ENCODE measurements at regions of chr18 and their contacts with region 1.

Region 1: DNA sequence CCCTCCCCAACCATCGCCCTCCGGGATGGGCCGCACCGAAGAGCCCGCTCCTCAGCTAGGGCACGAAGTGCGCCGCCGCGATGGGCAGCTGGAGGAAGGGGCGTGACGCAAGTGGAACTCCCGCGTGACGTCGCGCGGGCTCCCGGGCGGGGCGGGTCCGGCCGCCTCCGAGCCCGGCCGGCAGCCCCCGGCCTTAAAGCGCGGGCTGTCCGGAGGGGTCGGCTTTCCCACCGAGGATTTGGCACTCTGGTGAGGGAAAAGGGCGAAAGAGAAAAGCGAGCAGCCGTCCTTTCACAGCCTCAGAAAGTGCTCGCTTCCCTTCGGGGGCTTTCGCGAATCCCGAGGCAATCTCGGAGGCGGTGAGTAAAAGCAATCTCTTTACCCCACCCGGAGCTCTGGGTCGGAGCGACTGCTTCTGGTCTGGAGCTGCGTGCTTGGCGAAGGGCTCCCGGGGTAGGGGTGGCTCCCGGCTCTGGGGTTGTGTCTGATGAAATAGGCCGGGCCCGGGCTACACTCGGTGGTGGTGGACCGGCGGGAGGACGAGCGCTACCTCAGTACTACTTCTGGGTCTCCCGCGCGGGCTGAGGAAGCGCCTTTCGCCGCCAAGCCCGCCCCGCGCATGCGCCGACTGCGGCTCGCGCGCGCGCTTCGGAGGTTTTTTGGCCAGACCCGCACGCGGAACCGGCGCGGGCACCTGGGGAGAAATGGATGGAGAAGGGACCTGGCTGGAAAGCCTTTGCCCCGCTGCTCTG is at the start of gene RBBP8:
- DNase-seq: peak; percentile 53 to 76
- H3K4me3 ChIP-seq: peak within 1 kb of the TSS; percentile 86
- H3K27ac ChIP-seq: peak within 1 kb of the TSS; percentile 71
- H3K4me1 ChIP-seq: peaks cover 7% of the 10 kb centered on the region; the same call in 1 of the 2 replicates
- H3K27me3 ChIP-seq: no peaks in the 10 kb centered on the region
- CTCF ChIP-seq: no peak
- total RNA-seq, gene RBBP8: 22.0 and 28.4 TPM in 2 replicates

Region 2: GRCh38 chr18:22813648-22814328 is 119.6 kb before region 1 on chr18:
- CTCF ChIA-PET with region 1: interaction called, 4 read pairs
- POLR2A ChIA-PET with region 1: no interaction called
- intact Hi-C with region 1: loop called (anchors 5 kb)
- DNase-seq: peak in 1 of 2 experiments; percentile 39
- H3K4me3 ChIP-seq: no peak overlapping the region
- H3K27ac ChIP-seq: no peak overlapping the region
- H3K4me1 ChIP-seq: 0 out of 2 replicates have a peak, but pooled peaks cover 5% of the 10 kb centered on the region
- H3K27me3 ChIP-seq: no peaks in the 10 kb centered on the region
- CTCF ChIP-seq: peak; percentile 72

Region 3: DNA sequence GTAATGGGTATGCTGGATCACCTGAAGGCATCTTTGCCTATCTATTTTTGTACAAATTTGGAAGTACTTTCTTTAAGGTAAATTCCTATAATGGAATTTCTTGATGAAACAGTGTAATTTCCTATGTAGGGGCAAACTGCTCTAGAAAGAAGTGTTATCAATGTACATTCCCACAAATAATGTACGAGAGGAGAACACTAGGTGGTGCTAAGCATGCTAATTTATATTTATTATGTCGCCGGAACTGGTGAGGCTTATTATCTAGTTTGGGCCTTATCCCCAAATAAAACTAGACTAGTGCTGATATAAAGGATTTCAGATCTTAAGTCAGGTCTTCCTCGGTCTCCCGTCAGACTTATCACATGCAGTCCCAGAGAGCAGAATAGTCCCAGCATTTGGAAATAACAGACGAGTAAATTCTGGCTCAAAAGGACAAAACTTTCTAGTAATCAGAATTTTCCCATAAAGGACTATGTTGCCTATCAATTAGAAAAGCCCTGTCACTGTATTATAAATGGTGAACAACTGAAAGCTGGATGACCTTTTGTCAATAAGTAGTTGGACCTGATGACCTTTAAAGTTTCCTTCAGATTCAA is 87.2 kb before region 1 on chr18:
- CTCF ChIA-PET with region 1: interaction called, 10 read pairs
- POLR2A ChIA-PET with region 1: no interaction called
- intact Hi-C with region 1: loop called (anchors 5 kb)
- DNase-seq: no peak
- H3K4me3 ChIP-seq: no peak overlapping the region
- H3K27ac ChIP-seq: no peak overlapping the region
- H3K4me1 ChIP-seq: peaks cover 44% of the 10 kb centered on the region
- H3K27me3 ChIP-seq: no peaks in the 10 kb centered on the region
- CTCF ChIP-seq: peak; percentile 39; the same call in 1 of the 2 replicates

Region 4: GRCh38 chr18:22872900-22873551 is 60.4 kb before region 1 on chr18:
- CTCF ChIA-PET with region 1: no interaction called
- POLR2A ChIA-PET with region 1: no interaction called
- intact Hi-C with region 1: no loop called
- DNase-seq: no peak
- H3K4me3 ChIP-seq: no peak overlapping the region
- H3K27ac ChIP-seq: no peak overlapping the region
- H3K4me1 ChIP-seq: no peaks in the 10 kb centered on the region
- H3K27me3 ChIP-seq: no peaks in the 10 kb centered on the region
- CTCF ChIP-seq: no peak

Region 5: DNA sequence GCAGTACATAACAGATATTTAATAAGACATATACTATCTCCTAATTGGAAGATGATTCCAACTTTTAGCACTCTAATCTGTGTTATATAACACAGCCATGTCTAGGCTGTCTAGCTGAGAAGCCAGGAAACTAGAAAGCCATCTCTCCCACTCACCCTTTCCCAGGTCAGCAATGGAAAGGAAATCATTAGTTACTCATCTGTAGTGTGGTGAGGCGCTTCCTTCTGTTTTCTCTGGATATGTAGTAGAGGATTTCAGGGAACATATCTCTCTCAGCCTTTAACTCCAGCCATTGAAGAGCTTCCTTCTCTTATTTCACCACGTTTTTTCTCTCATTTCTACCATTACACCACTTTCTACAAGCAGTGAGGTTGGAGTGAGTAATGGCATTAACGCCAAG is 19.1 kb after region 1 on chr18:
- CTCF ChIA-PET with region 1: no interaction called
- POLR2A ChIA-PET with region 1: no interaction called
- intact Hi-C with region 1: no loop called
- DNase-seq: no peak
- H3K4me3 ChIP-seq: no peak overlapping the region
- H3K27ac ChIP-seq: no peak overlapping the region
- H3K4me1 ChIP-seq: no peaks in the 10 kb centered on the region
- H3K27me3 ChIP-seq: no peaks in the 10 kb centered on the region
- CTCF ChIP-seq: no peak

Region 6: GRCh38 chr18:22971038-22971437 is 37.7 kb after region 1 on chr18:
- CTCF ChIA-PET with region 1: no interaction called
- POLR2A ChIA-PET with region 1: interaction called, 26 read pairs
- intact Hi-C with region 1: no loop called
- DNase-seq: no peak
- H3K4me3 ChIP-seq: no peak overlapping the region
- H3K27ac ChIP-seq: no peak overlapping the region
- H3K4me1 ChIP-seq: no peaks in the 10 kb centered on the region
- H3K27me3 ChIP-seq: no peaks in the 10 kb centered on the region
- CTCF ChIP-seq: no peak

Region 7: GRCh38 chr18:22983175-22983574 is 49.8 kb after region 1 on chr18:
- CTCF ChIA-PET with region 1: interaction called, 3 read pairs
- POLR2A ChIA-PET with region 1: no interaction called
- intact Hi-C with region 1: loop called (anchors 10 kb)
- DNase-seq: no peak
- H3K4me3 ChIP-seq: no peak overlapping the region
- H3K27ac ChIP-seq: no peak overlapping the region
- H3K4me1 ChIP-seq: peaks cover 8% of the 10 kb centered on the region
- H3K27me3 ChIP-seq: no peaks in the 10 kb centered on the region
- CTCF ChIP-seq: peak; percentile 62

Region 8: GRCh38 chr18:23719634-23720201 is 786.3 kb after region 1 on chr18:
- CTCF ChIA-PET with region 1: no interaction called
- POLR2A ChIA-PET with region 1: interaction called, 15 read pairs
- intact Hi-C with region 1: no loop called
- DNase-seq: peak; percentile 48 to 83
- H3K4me3 ChIP-seq: no peak overlapping the region
- H3K27ac ChIP-seq: peak overlapping the region; percentile 95
- H3K4me1 ChIP-seq: peaks cover 20% of the 10 kb centered on the region
- H3K27me3 ChIP-seq: no peaks in the 10 kb centered on the region
- CTCF ChIP-seq: no peak